ENCODE measurements at regions of chr12 and their contacts with region 1.

Region 1: GRCh38 chr12:106223485-106224354 is 24.1 kb downstream of the CKAP4 start:
- DNase-seq: peak; percentile 49
- ATAC-seq: peak; percentile 74
- H3K4me3 Mint-ChIP-seq: no peak overlapping the region
- H3K27ac Mint-ChIP-seq: no peak overlapping the region
- H3K4me1 Mint-ChIP-seq: peaks cover 18% of the 10 kb centered on the region
- H3K27me3 Mint-ChIP-seq: peaks cover 18% of the 10 kb centered on the region
- CTCF ChIP-seq: peak; percentile 70

Region 2: GRCh38 chr12:106149096-106149784 is 74.5 kb before region 1 on chr12:
- CTCF ChIA-PET with region 1: no interaction called
- POLR2A ChIA-PET with region 1: no interaction called
- intact Hi-C with region 1: no loop called
- DNase-seq: no peak
- ATAC-seq: no peak
- H3K4me3 Mint-ChIP-seq: no peak overlapping the region
- H3K27ac Mint-ChIP-seq: no peak overlapping the region
- H3K4me1 Mint-ChIP-seq: no peaks in the 10 kb centered on the region
- H3K27me3 Mint-ChIP-seq: peaks cover 31% of the 10 kb centered on the region
- CTCF ChIP-seq: no peak

Region 3: DNA sequence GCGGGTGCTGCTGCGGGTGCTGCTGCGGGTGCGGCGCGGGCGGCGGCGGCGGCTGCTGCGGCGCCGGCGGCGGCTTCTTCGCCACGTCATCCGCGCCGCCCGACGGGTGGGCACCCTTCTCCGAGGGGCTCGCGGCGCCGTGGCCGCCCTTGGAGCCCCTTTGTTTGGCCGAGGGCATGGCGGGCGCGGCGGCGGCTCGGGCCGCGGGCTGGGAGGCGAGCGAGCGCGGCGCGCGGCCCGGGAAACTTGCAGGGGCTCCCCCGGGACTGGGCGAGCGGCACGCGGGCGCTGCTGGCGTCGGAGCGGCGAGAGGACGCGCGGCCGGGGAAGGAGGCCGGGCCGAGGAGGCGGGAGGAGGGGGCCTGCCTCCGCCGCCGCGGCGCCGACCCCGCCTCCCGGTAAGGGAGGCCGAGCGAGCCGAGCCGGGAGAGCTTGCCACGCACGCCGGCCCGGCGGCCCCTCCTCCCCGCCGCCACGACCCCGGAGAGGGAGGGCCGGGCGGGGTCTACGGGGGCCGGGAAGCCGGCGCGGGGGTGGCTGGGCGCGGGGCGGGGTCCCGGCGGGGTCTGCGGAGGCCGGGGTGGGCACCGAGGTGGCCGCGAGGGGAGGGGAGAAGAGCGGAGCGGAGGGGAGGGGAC is 24.1 kb after region 1 on chr12 and contains the start of gene CKAP4:
- CTCF ChIA-PET with region 1: interaction called, 11 read pairs
- POLR2A ChIA-PET with region 1: interaction called, 11 read pairs
- intact Hi-C with region 1: loop called (anchors 1 kb)
- DNase-seq: peak; percentile 73
- ATAC-seq: peak; percentile 71
- H3K4me3 Mint-ChIP-seq: peak within 1 kb of the TSS; percentile 82
- H3K27ac Mint-ChIP-seq: peak within 1 kb of the TSS; percentile 80
- H3K4me1 Mint-ChIP-seq: peaks cover 54% of the 10 kb centered on the region
- H3K27me3 Mint-ChIP-seq: no peaks in the 10 kb centered on the region
- CTCF ChIP-seq: no peak
- total RNA-seq, gene CKAP4: 15.9 and 17.1 TPM in 2 replicates

Region 4: GRCh38 chr12:106282457-106283097 is 58.9 kb after region 1 on chr12:
- CTCF ChIA-PET with region 1: interaction called, 140 read pairs
- POLR2A ChIA-PET with region 1: interaction called, 18 read pairs
- intact Hi-C with region 1: loop called (anchors 1 kb)
- DNase-seq: no peak
- ATAC-seq: peak; percentile 84
- H3K4me3 Mint-ChIP-seq: no peak overlapping the region
- H3K27ac Mint-ChIP-seq: no peak overlapping the region
- H3K4me1 Mint-ChIP-seq: peaks cover 29% of the 10 kb centered on the region
- H3K27me3 Mint-ChIP-seq: peaks cover 5% of the 10 kb centered on the region
- CTCF ChIP-seq: peak; percentile 76

Region 5: DNA sequence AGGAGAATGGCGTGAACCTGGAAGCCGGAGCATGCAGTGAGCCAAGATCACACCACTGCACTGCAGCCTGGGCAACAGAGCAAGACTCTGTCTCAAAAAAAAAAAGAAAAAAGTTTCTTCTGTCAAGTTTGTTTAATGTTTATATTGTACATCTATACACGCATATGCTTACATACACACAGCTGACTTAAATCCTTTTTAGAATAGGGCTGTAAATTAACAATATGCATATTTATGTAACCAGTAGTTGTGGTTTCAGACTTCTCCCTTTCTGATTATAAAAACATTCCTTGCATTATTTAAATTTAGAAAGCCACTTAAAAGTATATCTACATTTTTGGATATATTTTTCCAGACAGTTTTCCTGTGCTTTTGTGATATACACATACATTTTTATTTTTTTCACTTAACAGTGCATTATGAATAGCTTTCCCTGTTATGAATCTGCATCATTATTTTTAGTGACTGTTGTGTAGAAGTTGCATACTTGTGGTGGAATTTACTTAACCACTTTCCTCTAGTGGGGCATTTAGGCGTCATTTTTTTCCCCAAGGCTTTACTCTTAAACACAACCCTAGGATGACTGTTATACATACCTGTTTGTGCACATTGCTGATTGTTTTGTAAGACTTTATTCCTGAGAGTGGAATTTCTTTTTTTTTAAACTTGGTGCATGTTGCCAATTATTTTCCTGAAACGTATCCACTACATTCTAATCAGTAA is 163.3 kb after region 1 on chr12:
- CTCF ChIA-PET with region 1: no interaction called
- POLR2A ChIA-PET with region 1: no interaction called
- intact Hi-C with region 1: loop called (anchors 1 kb)
- DNase-seq: no peak
- ATAC-seq: no peak
- H3K4me3 Mint-ChIP-seq: no peak overlapping the region
- H3K27ac Mint-ChIP-seq: no peak overlapping the region
- H3K4me1 Mint-ChIP-seq: no peaks in the 10 kb centered on the region
- H3K27me3 Mint-ChIP-seq: peaks cover 4% of the 10 kb centered on the region
- CTCF ChIP-seq: no peak

Region 6: DNA sequence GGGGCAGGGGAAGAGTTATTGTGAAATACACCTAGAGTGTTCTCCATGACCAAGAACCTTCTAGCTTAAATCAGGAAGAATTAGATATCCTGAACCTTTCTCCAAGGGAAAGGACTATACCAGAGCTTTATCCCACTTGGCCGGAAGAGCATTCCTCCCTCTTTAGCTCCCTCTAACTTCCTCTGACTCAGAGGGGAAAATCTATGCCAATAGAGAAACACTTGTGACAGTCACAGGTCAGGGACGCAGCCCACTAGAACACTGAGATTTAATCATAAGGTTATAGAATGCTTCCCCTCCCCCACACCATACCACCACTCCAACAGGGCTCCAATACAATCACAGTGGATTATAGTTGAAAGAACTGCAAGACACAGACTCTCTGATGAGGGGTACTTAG is 303.6 kb after region 1 on chr12:
- CTCF ChIA-PET with region 1: no interaction called
- POLR2A ChIA-PET with region 1: no interaction called
- intact Hi-C with region 1: no loop called
- DNase-seq: no peak
- ATAC-seq: no peak
- H3K4me3 Mint-ChIP-seq: no peak overlapping the region
- H3K27ac Mint-ChIP-seq: no peak overlapping the region
- H3K4me1 Mint-ChIP-seq: no peaks in the 10 kb centered on the region
- H3K27me3 Mint-ChIP-seq: peaks cover 11% of the 10 kb centered on the region
- CTCF ChIP-seq: no peak

Region 7: DNA sequence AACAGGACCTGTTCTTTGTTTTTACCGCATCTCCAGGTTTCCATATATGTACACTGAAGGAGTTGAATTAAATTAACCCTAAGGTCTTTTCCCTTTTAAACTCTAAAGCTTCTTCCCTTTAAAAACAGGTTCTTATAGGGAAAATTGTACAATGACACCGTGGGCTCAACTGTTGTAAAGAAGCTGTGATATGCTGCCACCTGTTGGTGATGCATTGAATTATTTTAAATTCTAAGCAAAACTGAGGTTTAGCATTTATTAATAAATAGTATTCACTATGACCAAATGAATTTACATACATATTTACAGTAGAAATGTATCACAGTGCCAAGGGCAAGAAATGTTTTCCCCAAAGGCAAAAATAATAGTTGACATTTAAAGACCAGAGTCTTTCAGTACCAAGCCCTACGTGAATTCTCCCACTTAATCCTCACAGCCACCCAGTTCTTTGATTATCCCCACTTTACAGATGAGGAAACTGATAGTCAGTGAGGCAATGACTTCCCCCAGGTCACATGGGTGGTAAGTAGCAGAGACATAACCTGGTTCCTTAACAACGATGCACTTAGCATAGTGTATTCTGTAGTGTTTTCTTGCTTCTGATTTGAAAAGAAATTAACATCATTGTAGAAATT is 696.3 kb after region 1 on chr12:
- CTCF ChIA-PET with region 1: no interaction called
- POLR2A ChIA-PET with region 1: no interaction called
- intact Hi-C with region 1: loop called (anchors 2 kb)
- DNase-seq: no peak
- ATAC-seq: peak; percentile 31
- H3K4me3 Mint-ChIP-seq: no peak overlapping the region
- H3K27ac Mint-ChIP-seq: no peak overlapping the region
- H3K4me1 Mint-ChIP-seq: no peaks in the 10 kb centered on the region
- H3K27me3 Mint-ChIP-seq: peaks cover 66% of the 10 kb centered on the region
- CTCF ChIP-seq: peak; percentile 58